ENCODE measurements at regions of chr1 and their contacts with region 1.

Region 1: DNA sequence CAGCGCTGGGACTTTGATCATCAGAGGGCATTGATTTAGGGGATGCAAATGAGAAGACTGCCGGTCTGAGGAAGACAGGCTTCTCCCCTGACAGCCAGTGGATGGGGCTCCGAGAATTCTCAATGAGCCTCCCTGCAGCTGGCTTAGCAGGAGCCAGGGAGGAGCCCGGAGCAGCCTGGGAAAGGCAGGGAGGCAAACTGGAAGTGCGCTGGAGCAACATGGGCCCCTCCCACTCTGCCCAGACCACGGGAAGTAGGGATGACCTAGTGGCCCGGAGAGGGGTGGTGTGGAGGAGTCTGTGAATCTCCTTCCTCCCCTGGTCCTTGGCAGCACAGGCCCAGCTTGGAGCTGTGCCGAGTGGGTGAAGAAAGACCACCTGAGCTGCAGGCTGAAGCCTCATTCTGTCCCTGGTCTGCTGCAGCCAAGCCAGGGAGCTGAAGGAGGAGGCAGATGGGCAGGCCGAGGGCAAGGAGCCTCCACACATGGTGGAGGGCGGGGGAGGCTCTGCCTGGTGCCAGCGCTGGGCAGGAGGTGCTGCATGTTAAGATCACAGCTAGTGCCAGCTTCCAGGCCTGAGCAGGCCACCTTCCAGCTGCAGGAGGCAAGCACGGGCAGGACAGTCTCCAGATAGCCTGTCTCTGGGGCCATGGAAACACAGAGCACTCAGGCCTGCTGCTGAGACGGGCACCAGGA is 12.1 kb upstream of the CLSTN1 start:
- DNase-seq: peak; percentile 55
- H3K4me3 ChIP-seq: peak overlapping the region; percentile 3 to 43 (median 25)
- H3K27ac ChIP-seq: peak overlapping the region; percentile 51
- H3K4me1 ChIP-seq: peaks cover 50% of the 10 kb centered on the region
- H3K27me3 ChIP-seq: no peaks in the 10 kb centered on the region
- CTCF ChIP-seq: peak in 1 of 2 donors; percentile 4

Region 2: GRCh38 chr1:9766759-9767442 is 69.0 kb before region 1 on chr1:
- CTCF ChIA-PET with region 1: no interaction called
- dilution Hi-C with region 1: no loop called
- in situ Hi-C with region 1: no loop called
- intact Hi-C with region 1: loop called (anchors 2 kb)
- DNase-seq: peak; percentile 100
- H3K4me3 ChIP-seq: no peak overlapping the region
- H3K27ac ChIP-seq: peak overlapping the region; percentile 89
- H3K4me1 ChIP-seq: peaks cover 18% of the 10 kb centered on the region
- H3K27me3 ChIP-seq: no peaks in the 10 kb centered on the region
- CTCF ChIP-seq: no peak